ENCODE measurements at regions of chrX and their contacts with region 1.

Region 1: GRCh38 chrX:154348114-154348531 is 26.3 kb downstream of the FLNA start:
- DNase-seq: no peak
- ATAC-seq: no peak
- H3K4me3 Mint-ChIP-seq: peak overlapping the region in 6 of 10 donors; percentile 18 to 51 (median 23)
- H3K27ac Mint-ChIP-seq: peak overlapping the region; percentile 46 to 97 (median 92)
- H3K4me1 Mint-ChIP-seq: peaks cover 6 to 50% (median 43%) of the 10 kb centered on the region in 4 donors
- H3K27me3 Mint-ChIP-seq: no peaks in the 10 kb centered on the region

Region 2: DNA sequence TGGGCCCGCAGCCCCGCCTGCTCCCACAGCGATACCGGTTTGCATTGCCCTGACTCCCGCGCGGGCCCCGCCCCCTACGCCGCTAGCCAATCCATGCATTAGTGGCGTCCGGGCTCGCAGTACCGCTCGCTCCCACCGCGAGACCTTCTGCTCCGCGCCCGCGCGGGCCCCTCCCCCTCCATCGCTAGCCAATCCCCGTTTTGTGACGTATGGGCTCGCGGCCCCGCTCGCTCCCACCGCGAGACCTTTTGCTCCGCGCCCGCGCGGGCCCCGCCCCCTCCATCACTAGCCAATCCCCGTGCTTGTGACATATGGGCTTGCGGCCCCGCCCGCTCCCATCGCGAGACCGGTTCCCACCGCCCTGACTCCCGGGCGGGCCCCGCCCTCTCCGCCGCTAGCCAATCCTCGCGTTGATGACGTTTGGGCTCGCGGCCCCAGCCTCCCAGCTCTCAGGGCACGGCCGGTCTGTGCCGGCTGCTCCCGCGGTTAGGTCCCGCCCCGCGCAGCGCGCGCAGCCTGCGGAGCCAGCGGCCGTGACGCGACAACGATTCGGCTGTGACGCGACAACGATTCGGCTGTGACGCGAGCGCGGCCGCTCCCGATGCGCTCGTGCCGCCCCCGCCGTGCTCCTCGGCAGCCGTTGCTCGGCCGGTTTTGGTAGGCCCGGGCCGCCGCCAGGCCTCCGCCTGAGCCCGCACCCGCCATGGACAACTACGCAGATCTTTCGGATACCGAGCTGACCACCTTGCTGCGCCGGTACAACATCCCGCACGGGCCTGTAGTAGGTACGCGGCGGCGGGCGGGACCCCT is 30.9 kb after region 1 on chrX and contains the start of gene EMD:
- POLR2A ChIA-PET with region 1: interaction called, 17 read pairs
- DNase-seq: peak; percentile 85 to 99 (median 96)
- ATAC-seq: peak; percentile 79 to 82
- H3K4me3 Mint-ChIP-seq: peak within 1 kb of the TSS; percentile 73 to 92 (median 84)
- H3K27ac Mint-ChIP-seq: peak within 1 kb of the TSS; percentile 74 to 97 (median 94)
- H3K4me1 Mint-ChIP-seq: peaks cover 2 to 23% (median 21%) of the 10 kb centered on the region in 4 donors
- H3K27me3 Mint-ChIP-seq: no peaks in the 10 kb centered on the region
- polyA plus RNA-seq, gene EMD: 35.5 to 37.1 (median 35.7) TPM